ENCODE measurements at regions of chr9 and their contacts with region 1.

Region 1: DNA sequence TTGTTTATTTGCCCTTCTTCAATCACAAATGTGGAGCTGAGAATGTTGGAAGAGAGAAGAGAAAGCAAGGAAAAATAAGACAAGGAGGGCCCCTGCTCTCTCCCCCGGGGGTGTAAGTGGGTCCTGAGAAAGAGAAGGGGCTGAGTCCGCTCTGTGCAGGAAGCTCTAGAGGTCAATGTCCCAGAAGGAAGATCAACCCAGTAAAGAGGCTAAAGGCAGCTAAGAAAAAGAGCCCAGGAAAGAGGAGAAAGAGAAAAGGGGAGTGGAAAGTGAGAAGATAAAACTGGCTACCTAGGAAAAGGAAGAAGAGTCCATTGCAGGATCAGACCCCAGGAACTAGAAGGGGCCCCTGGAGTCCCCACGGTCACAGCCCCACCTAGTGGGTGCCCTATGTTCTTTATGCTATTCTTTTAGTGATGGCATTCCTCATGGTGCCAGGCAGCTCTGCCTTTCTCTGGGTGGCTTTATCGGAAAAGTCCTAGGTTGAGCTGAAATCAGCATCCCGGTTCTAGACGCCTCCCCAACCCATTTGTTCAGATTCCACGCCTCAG is 583.4 kb downstream of the ACTL7B start:
- DNase-seq: peak; percentile 38
- ATAC-seq: peak; percentile 84
- H3K4me3 ChIP-seq: no peak overlapping the region
- H3K27ac ChIP-seq: no peak overlapping the region
- H3K4me1 ChIP-seq: peaks cover 19 to 41% of the 10 kb centered on the region in 2 experiments; a peak in 3 of 4 replicates
- H3K27me3 ChIP-seq: no peaks in the 10 kb centered on the region
- CTCF ChIP-seq: peak; percentile 65 to 66 (median 66)
- POLR2A ChIP-seq: no peak
- RAD21 ChIP-seq: peak; percentile 94

Region 2: DNA sequence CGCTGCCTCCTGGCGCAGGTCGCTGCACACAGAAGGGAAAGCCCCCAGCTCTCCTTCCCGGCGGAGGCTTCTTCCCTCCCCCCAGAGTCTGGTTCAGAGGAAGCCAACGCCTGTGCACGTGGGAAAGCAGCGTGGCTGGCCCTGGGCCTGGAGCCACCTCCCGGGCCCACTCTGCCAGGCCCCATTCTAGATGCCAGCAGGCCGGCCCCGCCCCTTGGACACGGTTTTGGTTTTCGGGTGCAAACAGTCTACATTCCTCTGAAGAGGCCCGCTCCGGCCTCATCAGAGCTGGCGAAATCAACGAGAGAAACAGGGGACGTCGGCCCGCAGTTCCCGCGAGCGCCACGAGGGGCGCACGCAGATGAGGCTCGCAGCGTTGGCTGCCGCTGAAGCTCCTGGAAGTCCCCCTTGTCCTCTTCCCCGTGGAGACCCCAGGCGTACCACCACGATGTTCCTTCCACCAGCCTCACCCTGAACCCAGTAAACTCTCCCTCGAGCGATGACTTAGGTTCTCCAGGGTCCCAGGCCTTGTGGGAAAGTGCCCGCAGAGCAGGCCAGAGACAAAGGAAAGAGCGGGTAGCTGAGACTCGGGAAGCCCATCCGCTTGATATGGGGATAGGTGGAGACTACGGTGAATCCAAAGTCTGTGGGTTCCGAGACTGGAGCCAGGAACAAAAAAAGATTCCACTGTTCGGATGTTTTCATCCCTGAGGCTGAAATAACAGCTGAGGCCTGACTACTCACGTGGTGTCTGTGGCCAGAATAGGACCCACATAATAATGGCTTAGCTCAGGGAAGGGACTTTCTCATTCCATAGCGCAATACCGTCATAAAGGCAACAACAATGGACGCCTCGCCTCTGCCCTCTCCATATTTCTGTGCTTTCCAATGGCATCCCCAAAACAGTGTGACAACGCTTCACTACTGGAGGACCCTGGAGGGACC is 847.1 kb before region 1 on chr9:
- CTCF ChIA-PET with region 1: interaction called, 11 read pairs
- POLR2A ChIA-PET with region 1: no interaction called
- RAD21 ChIA-PET with region 1: interaction called in 1 of 2 experiments, 3 read pairs
- intact Hi-C with region 1: loop called (anchors 1 kb)
- DNase-seq: peak; percentile 50
- ATAC-seq: peak; percentile 75
- H3K4me3 ChIP-seq: peak overlapping the region in 1 of 2 experiments; percentile 11; a peak in 1 of 4 replicates
- H3K27ac ChIP-seq: peak overlapping the region; percentile 34
- H3K4me1 ChIP-seq: peaks cover 8 to 19% of the 10 kb centered on the region in 2 experiments; a peak in 3 of 4 replicates
- H3K27me3 ChIP-seq: no peaks in the 10 kb centered on the region
- CTCF ChIP-seq: peak; percentile 54 to 97 (median 97); a peak in 5 of 6 replicates
- POLR2A ChIP-seq: no peak
- RAD21 ChIP-seq: peak; percentile 74

Region 3: DNA sequence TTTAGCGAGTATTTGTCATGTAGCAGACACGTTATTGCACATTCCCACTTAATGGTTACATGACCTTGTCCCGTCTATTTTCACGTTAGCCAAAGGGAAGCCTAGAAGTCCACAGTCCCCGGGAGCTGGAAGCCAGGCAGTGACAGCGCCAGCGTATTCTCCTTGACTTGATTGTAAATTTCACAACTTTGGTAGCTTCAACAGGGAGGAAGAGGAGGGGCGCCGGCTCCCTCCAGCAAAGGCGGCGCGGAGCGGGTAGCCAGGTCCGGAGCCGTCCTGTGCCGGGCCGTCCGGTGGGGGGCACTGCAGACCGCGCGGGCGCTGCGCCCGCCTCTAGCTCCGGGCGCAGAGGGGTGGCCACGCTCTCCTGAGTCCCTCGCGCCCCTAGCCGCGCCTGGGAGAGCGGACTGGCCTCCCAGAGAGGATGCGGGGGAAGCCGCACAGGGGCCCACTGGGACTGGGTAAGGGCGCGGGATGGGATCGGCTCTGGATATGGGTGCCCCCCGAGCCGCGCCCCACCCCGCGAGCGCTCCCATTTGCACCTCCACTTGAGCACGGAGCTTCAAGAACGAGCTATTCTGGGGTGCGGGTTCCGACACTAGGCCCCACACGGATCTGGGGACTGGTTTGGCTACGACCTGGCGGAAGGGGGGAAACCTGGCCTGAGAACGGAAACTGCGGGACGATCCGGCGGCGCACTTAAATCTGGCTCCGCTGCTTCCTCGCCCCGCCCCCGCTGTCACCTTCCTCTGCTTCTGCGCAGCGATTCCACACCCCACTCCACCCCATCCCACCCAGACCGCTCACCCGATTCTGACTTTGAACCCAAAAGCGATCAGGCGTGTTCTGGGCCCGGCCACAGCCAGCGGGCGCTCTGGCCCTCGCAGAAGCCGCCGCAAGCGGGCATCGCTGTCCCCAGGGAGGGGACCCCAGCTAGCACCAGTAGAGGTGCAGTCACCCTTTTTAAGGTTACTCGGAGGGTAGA is 806.7 kb before region 1 on chr9:
- CTCF ChIA-PET with region 1: interaction called, 7 read pairs
- POLR2A ChIA-PET with region 1: no interaction called
- RAD21 ChIA-PET with region 1: no interaction called
- intact Hi-C with region 1: loop called (anchors 5 kb)
- DNase-seq: no peak
- ATAC-seq: peak; percentile 97
- H3K4me3 ChIP-seq: peak overlapping the region; percentile 8 to 42
- H3K27ac ChIP-seq: no peak overlapping the region
- H3K4me1 ChIP-seq: peaks cover 0 to 13% of the 10 kb centered on the region in 2 experiments; a peak in 3 of 4 replicates
- H3K27me3 ChIP-seq: no peaks in the 10 kb centered on the region
- CTCF ChIP-seq: peak; percentile 57 to 78 (median 75)
- POLR2A ChIP-seq: no peak
- RAD21 ChIP-seq: peak; percentile 89

Region 4: DNA sequence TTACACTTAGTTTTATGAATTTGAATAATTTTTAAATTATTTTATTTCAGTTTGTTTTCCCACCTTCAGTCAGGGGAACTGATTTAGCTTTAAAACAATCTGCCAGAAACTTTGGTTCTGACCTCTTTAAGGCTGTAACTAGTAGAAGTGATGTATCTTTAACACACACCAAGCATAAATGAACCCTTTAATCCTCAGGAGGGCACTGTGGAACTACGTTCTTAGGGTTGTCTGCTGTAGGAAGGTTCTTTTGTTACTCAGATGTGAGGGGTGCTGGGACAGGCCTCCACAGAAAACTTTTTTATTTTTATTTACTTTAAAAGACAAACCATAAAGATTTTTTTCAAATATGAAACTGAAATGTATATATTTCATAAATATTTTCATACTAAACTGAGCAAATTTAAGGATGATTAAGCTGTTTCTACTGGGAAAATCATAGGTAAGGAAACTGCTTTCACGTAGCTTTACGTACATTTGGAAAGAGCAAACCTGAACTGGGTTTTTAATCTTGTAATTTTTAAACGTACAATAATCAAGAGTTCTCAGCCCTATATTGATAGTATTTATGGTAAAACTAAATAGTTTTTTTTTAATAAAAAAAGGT is 788.2 kb before region 1 on chr9:
- CTCF ChIA-PET with region 1: interaction called, 10 read pairs
- POLR2A ChIA-PET with region 1: no interaction called
- RAD21 ChIA-PET with region 1: interaction called in 1 of 2 experiments, 3 read pairs
- intact Hi-C with region 1: loop called (anchors 1 kb)
- DNase-seq: peak; percentile 64
- ATAC-seq: peak; percentile 63
- H3K4me3 ChIP-seq: no peak overlapping the region
- H3K27ac ChIP-seq: no peak overlapping the region
- H3K4me1 ChIP-seq: peaks cover 13 to 37% of the 10 kb centered on the region in 2 experiments; a peak in 3 of 4 replicates
- H3K27me3 ChIP-seq: no peaks in the 10 kb centered on the region
- CTCF ChIP-seq: peak in 2 of 3 experiments; percentile 44 to 59; a peak in 3 of 6 replicates
- POLR2A ChIP-seq: no peak
- RAD21 ChIP-seq: no peak

Region 5: GRCh38 chr9:107749787-107750444 is 522.5 kb before region 1 on chr9:
- CTCF ChIA-PET with region 1: interaction called, 3 read pairs
- POLR2A ChIA-PET with region 1: no interaction called
- RAD21 ChIA-PET with region 1: no interaction called
- intact Hi-C with region 1: loop called (anchors 2 kb)
- DNase-seq: peak; percentile 85
- ATAC-seq: peak; percentile 86
- H3K4me3 ChIP-seq: peak overlapping the region in 1 of 2 experiments; percentile 39; a peak in 2 of 4 replicates
- H3K27ac ChIP-seq: peak overlapping the region; percentile 88
- H3K4me1 ChIP-seq: peaks cover 44 to 62% of the 10 kb centered on the region in 2 experiments
- H3K27me3 ChIP-seq: no peaks in the 10 kb centered on the region
- CTCF ChIP-seq: no peak
- POLR2A ChIP-seq: peak; percentile 52
- RAD21 ChIP-seq: no peak

Region 6: GRCh38 chr9:108002371-108002956 is 270.0 kb before region 1 on chr9:
- CTCF ChIA-PET with region 1: interaction called, 4 read pairs
- POLR2A ChIA-PET with region 1: no interaction called
- RAD21 ChIA-PET with region 1: interaction called in 1 of 2 experiments, 5 read pairs
- intact Hi-C with region 1: loop called (anchors 5 kb)
- DNase-seq: peak; percentile 4
- ATAC-seq: no peak
- H3K4me3 ChIP-seq: peak overlapping the region in 1 of 2 experiments; percentile 8; a peak in 2 of 4 replicates
- H3K27ac ChIP-seq: peak overlapping the region; percentile 82
- H3K4me1 ChIP-seq: peaks cover 41 to 63% of the 10 kb centered on the region in 2 experiments
- H3K27me3 ChIP-seq: no peaks in the 10 kb centered on the region
- CTCF ChIP-seq: no peak
- POLR2A ChIP-seq: no peak
- RAD21 ChIP-seq: no peak

Region 7: DNA sequence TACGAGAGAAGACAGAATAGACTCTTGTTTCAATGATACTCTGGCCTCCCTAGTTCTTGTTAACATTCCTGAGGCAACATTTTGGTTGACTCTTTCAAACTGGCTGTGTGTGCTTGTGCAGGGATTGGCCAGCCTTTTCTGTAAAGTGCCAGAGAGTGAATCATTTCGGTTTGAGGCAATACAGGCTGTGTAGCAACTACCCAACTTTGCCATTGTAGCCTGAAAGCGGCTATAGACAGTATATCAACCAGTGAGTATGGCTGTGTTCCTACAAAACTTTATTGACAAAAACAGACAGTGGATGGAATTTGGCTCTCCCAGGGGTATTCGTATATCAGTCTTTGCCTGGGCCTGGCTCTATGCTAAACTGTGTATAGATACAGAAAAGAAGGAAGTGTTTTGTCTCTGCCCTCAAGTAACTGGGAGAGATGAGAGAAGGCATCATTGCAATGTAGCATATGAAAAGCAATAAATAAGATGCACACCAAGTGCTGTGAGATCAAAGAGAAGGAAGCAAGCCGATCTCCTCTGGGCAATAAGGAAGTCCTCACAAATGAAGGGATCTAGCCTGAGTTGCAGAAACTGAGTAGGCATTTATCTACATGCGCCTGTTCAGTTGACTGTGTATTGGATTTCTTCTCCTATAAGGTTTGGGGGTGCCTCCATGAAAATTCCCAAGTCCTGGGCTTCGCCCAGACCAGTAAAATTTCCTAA is 214.8 kb before region 1 on chr9:
- CTCF ChIA-PET with region 1: no interaction called
- POLR2A ChIA-PET with region 1: no interaction called
- RAD21 ChIA-PET with region 1: no interaction called
- intact Hi-C with region 1: loop called (anchors 5 kb)
- DNase-seq: no peak
- ATAC-seq: peak; percentile 74
- H3K4me3 ChIP-seq: peak overlapping the region in 1 of 2 experiments; percentile 31; a peak in 2 of 4 replicates
- H3K27ac ChIP-seq: peak overlapping the region; percentile 11; the same call in 1 of the 2 replicates
- H3K4me1 ChIP-seq: peaks cover 39 to 81% of the 10 kb centered on the region in 2 experiments
- H3K27me3 ChIP-seq: no peaks in the 10 kb centered on the region
- CTCF ChIP-seq: no peak
- POLR2A ChIP-seq: no peak
- RAD21 ChIP-seq: 0 out of 2 replicates have a peak, but pooled peaks have one; percentile 11

Measured in HCT116 (cell line).